ENCODE measurements at regions of chr3 and their contacts with region 1.

Region 1: DNA sequence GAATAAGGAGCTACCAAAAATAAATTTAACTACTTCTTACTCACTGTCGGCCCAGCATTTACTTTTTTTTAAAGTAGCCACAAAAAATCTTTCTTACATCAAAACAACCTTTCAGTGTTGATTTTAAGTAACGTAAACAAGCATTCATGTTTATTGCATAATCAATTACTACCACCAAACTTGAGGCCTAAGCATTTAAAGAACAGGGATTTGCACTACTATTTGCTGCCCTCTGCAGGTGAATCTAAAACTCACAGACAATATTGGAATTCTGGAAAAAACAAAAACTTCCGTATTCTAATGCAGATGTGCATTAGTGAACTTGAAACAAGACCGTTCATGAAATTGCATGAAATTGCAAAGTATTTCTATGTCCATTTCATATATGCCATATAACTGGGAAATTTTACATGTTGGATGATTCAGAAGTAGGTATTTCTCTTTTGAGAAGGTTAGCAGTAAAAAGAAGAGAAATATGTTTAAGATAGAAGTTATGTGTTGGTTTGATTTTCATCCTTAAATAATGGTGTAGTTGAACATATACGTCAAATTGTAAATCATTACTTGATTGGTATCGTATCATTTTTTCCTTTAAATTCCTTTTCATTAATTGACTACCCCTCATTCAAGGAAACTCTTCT is 55.6 kb downstream of the CGGBP1 start:
- DNase-seq: no peak
- H3K4me3 ChIP-seq: no peak overlapping the region
- H3K27ac ChIP-seq: no peak overlapping the region
- H3K4me1 ChIP-seq: no peaks in the 10 kb centered on the region
- H3K27me3 ChIP-seq: peaks cover 7% of the 10 kb centered on the region
- CTCF ChIP-seq: peak in 2 of 3 experiments; percentile 49 to 63

Region 2: GRCh38 chr3:87503900-87504508 is 499.2 kb before region 1 on chr3:
- dilution Hi-C with region 1: loop called (anchors 25 kb)
- DNase-seq: peak; percentile 9
- H3K4me3 ChIP-seq: no peak overlapping the region
- H3K27ac ChIP-seq: no peak overlapping the region
- H3K4me1 ChIP-seq: no peaks in the 10 kb centered on the region
- H3K27me3 ChIP-seq: no peaks in the 10 kb centered on the region
- CTCF ChIP-seq: peak; percentile 52 to 70 (median 68)

Region 3: GRCh38 chr3:87924485-87924884 is 78.8 kb before region 1 on chr3:
- dilution Hi-C with region 1: no loop called
- DNase-seq: no peak
- H3K4me3 ChIP-seq: no peak overlapping the region
- H3K27ac ChIP-seq: no peak overlapping the region
- H3K4me1 ChIP-seq: no peaks in the 10 kb centered on the region
- H3K27me3 ChIP-seq: no peaks in the 10 kb centered on the region
- CTCF ChIP-seq: no peak

Measured in keratinocyte (primary cell).